Gastrocnemius medialis (tissue), 4 donors: ENCODE measurements at regions of chr15 and their contacts with region 1.

Region 1: DNA sequence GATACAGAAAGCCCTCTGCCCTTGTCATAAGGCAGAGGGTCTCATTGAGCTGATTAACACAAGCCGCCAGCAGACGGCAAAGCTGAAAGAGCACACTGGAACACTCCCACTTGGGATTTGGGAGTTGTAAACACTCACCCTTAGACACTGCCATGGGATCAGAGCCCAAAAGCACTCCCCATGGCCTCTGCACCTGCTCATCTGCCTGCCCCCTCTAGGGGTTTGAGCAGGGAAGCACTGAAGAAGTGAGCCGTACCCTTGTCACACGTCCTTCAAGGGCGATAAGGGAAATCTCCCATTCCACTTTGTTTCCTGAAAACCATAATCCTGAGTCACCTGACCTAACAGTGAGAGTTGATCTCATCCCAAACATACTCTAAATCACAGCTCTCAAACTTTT is 14.7 kb downstream of the FSIP1 start:
- DNase-seq: no peak
- ATAC-seq: no peak
- H3K4me3 ChIP-seq: no peak overlapping the region
- H3K27ac ChIP-seq: no peak overlapping the region
- H3K4me1 ChIP-seq: peaks cover 0 to 4% of the 10 kb centered on the region in 2 donors
- H3K27me3 ChIP-seq: no peaks in the 10 kb centered on the region
- CTCF ChIP-seq: no peak
- POLR2A ChIP-seq: no peak

Region 2: GRCh38 chr15:38699633-38700230 is 1068.2 kb before region 1 on chr15:
- in situ Hi-C with region 1: loop called in 2 of 4 experiments (anchors 10 to 25 kb)
- intact Hi-C with region 1: no loop called
- DNase-seq: peak; percentile 6 to 17
- ATAC-seq: no peak
- H3K4me3 ChIP-seq: no peak overlapping the region
- H3K27ac ChIP-seq: no peak overlapping the region
- H3K4me1 ChIP-seq: no peaks in the 10 kb centered on the region
- H3K27me3 ChIP-seq: no peaks in the 10 kb centered on the region
- CTCF ChIP-seq: peak; percentile 40 to 73 (median 47)
- POLR2A ChIP-seq: no peak

Region 3: GRCh38 chr15:39686000-39686613 is 81.8 kb before region 1 on chr15:
- in situ Hi-C with region 1: loop called in 1 of 4 experiments (anchors 10 kb)
- intact Hi-C with region 1: no loop called
- DNase-seq: peak in 1 of 2 donors; percentile 9
- ATAC-seq: peak; percentile 65 to 66
- H3K4me3 ChIP-seq: no peak overlapping the region
- H3K27ac ChIP-seq: no peak overlapping the region
- H3K4me1 ChIP-seq: no peaks in the 10 kb centered on the region
- H3K27me3 ChIP-seq: no peaks in the 10 kb centered on the region
- CTCF ChIP-seq: peak; percentile 63 to 76 (median 67)
- POLR2A ChIP-seq: no peak

Region 4: DNA sequence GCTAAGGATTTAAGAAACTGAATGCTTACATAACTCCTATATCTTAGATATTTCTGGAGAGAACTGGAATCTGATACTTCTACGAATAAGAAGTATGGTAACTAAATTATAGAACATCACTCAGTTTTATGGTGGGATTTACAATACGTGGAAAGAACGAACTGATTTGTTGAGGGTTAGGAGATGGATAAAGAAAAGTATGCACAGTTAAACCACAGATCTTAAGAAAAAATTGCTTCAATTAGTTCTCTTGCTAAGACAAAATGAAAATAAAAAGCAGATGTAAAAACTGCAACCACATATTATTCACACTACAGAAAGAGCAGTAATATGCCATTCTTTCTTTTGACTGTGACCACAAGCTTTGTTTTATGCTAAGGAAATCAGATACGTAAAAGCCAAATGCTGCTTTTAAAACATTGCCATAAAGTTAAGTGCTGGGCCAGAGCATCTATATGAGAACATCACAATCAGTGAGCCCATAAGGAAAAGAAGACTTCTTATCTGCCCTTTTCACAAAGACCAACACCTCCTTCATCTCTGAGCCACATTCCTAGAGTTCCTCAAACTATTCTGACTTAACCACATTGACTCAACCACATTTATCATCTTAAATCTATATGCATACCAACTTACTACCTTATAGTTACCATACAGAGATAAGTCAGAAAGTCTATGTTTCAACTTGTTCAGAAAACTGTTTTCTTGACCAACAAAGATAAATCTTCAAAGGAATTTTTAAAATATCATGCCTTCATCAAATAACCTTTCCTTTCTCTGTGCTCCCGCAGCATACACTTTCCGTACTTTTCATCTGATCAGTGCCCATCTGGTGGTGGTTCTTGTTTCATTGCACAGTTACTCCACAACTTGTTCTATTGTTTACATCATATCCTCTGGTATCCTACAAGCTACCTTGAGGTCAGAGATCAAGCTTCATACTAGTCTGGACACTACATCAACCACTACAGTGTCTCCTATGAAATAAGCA is 47.0 kb before region 1 on chr15:
- in situ Hi-C with region 1: no loop called
- intact Hi-C with region 1: no loop called
- DNase-seq: no peak
- ATAC-seq: no peak
- H3K4me3 ChIP-seq: no peak overlapping the region
- H3K27ac ChIP-seq: no peak overlapping the region
- H3K4me1 ChIP-seq: no peaks in the 10 kb centered on the region
- H3K27me3 ChIP-seq: no peaks in the 10 kb centered on the region
- CTCF ChIP-seq: no peak
- POLR2A ChIP-seq: no peak